Thyroid gland (tissue), 4 donors: ENCODE measurements at regions of chr17 and their contacts with region 1.

Region 1: GRCh38 chr17:35432176-35433074 is at the start of gene SLFN12:
- DNase-seq: peak; percentile 74 to 79
- H3K4me3 ChIP-seq: peak within 1 kb of the TSS; percentile 22 to 84 (median 44)
- H3K27ac ChIP-seq: peak within 1 kb of the TSS; percentile 92 to 98 (median 97)
- H3K4me1 ChIP-seq: peaks cover 27 to 28% of the 10 kb centered on the region in 2 donors
- H3K27me3 ChIP-seq: no peaks in the 10 kb centered on the region
- CTCF ChIP-seq: no peak
- POLR2A ChIP-seq: peak in 1 of 2 donors; percentile 85
- total RNA-seq, gene SLFN12: 10.3 to 16.3 (median 13.1) TPM

Region 2: GRCh38 chr17:35359398-35359797 is 73.0 kb before region 1 on chr17:
- intact Hi-C with region 1: no loop called
- DNase-seq: no peak
- H3K4me3 ChIP-seq: no peak overlapping the region
- H3K27ac ChIP-seq: no peak overlapping the region
- H3K4me1 ChIP-seq: no peaks in the 10 kb centered on the region
- H3K27me3 ChIP-seq: no peaks in the 10 kb centered on the region
- CTCF ChIP-seq: no peak
- POLR2A ChIP-seq: no peak

Region 3: GRCh38 chr17:35373534-35373983 is 58.9 kb before region 1 on chr17 and contains the start of gene SLFN11:
- intact Hi-C with region 1: loop called (anchors 5 kb)
- DNase-seq: peak; percentile 86 to 88
- H3K4me3 ChIP-seq: peak within 1 kb of the TSS; percentile 73 to 82 (median 75)
- H3K27ac ChIP-seq: peak within 1 kb of the TSS; percentile 95 to 100 (median 98)
- H3K4me1 ChIP-seq: peaks cover 5 to 27% of the 10 kb centered on the region in 2 donors
- H3K27me3 ChIP-seq: no peaks in the 10 kb centered on the region
- CTCF ChIP-seq: no peak
- POLR2A ChIP-seq: peak; percentile 85 to 91
- total RNA-seq, gene SLFN11: 39.0 to 68.6 (median 55.0) TPM

Region 4: GRCh38 chr17:35578197-35578928 is 145.9 kb after region 1 on chr17 and contains the start of gene PEX12:
- intact Hi-C with region 1: no loop called
- DNase-seq: peak; percentile 92 to 93
- H3K4me3 ChIP-seq: peak within 1 kb of the TSS; percentile 68 to 79 (median 77)
- H3K27ac ChIP-seq: peak within 1 kb of the TSS; percentile 79 to 89 (median 86)
- H3K4me1 ChIP-seq: peaks cover 10 to 17% of the 10 kb centered on the region in 2 donors
- H3K27me3 ChIP-seq: no peaks in the 10 kb centered on the region
- CTCF ChIP-seq: no peak
- POLR2A ChIP-seq: peak in 1 of 2 donors; percentile 86
- total RNA-seq, gene PEX12: 6.1 to 12.0 (median 9.8) TPM